HAP-1 (cell line): ENCODE measurements at regions of chr6 and their contacts with region 1.

Region 1: GRCh38 chr6:132768051-132768517 is 10.4 kb upstream of the VNN2 start:
- DNase-seq: peak; percentile 51 to 62
- H3K4me3 ChIP-seq: no peak overlapping the region; the same call in 1 of the 2 replicates
- H3K4me1 ChIP-seq: peaks cover 2% of the 10 kb centered on the region
- H3K27me3 ChIP-seq: 0 out of 2 replicates have a peak, but pooled peaks cover 2% of the 10 kb centered on the region

Region 2: GRCh38 chr6:132530293-132530974 is 237.7 kb before region 1 on chr6:
- in situ Hi-C with region 1: loop called (anchors 10 kb)
- DNase-seq: peak; percentile 53 to 83
- H3K4me3 ChIP-seq: no peak overlapping the region
- H3K4me1 ChIP-seq: peaks cover 10% of the 10 kb centered on the region
- H3K27me3 ChIP-seq: peaks cover 2% of the 10 kb centered on the region